ENCODE measurements at regions of chr14 and their contacts with region 1.

Region 1: DNA sequence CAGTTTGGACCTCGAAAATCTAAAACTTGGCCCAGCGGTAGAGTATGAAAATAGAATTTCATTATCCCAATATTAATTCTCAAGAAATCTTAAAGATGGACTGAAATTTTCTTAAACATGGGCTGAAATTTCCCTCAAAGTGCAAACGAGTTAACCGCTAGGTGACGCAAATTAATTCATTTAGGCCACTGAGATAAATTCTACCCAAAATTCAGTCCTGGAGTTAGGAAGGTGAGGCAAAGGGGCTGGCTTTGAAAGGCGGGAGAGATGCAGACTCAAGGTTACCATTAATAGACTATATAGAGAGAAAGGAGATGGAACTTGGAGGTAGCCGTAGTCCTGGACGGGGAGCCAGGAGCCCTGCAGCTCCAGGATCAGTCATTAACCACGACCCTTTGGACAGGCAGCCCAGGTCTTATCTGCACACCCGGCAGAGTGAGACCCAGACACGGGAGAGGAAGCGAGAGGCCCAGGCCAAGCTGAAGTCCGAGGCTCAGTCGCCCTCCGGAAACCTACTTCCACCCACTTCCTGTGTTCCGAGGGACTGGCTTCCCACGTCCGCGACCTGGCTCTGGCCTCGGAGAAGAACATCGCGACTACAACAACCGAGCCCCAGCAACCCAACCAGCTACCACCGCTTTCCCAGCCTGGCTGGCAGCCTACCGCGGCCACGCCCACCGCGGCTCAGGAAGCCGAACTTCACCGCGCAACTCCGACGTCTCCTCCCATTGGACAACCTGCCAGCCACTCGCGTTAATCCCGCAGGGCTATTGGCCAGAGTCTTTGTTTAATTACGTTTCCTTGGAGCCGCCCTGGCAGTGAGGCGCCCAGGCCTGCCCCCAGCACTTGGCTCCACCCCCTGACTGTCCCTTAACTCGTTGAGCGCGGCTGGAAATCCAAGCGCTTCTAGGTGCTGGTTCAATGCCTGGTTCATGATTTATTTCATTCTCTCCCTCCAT is at the start of gene EFCAB11:
- DNase-seq: peak; percentile 99
- ATAC-seq: peak; percentile 75
- H3K4me3 ChIP-seq: peak within 1 kb of the TSS; percentile 81
- H3K27ac ChIP-seq: peak within 1 kb of the TSS; percentile 61
- H3K4me1 ChIP-seq: peaks cover 20% of the 10 kb centered on the region
- H3K27me3 ChIP-seq: no peaks in the 10 kb centered on the region
- CTCF ChIP-seq: peak; percentile 40; the same call in 1 of the 2 replicates
- total RNA-seq, gene EFCAB11: 7.0 and 10.0 TPM in 2 replicates

Region 2: DNA sequence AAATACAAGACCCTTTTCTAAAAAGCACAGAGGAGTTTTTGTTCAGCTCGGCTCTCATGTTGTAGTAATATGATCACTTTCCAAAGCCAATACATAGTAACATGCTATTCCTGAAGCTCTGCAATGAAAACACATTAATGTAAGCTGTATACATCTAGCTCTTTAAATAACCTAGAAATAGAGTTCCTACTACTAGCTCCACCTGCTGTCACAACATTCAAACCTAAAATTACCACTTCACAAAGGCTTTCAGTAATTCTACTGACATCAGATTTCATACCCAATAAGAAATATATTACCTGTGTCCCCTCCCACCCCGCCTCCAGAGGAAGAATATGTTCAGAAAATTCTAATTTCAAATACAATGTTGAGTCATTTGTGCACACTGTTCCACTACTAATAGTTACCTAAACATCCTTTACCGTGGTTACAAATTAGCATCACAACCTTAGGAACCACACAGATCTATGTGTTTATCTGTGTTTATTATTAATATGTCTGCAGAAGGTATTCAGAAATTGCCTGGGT is 17.6 kb before region 1 on chr14:
- CTCF ChIA-PET with region 1: interaction called, 4 read pairs
- POLR2A ChIA-PET with region 1: interaction called, 3 read pairs
- intact Hi-C with region 1: loop called (anchors 1 kb)
- DNase-seq: peak; percentile 26
- ATAC-seq: peak; percentile 64
- H3K4me3 ChIP-seq: no peak overlapping the region
- H3K27ac ChIP-seq: no peak overlapping the region
- H3K4me1 ChIP-seq: no peaks in the 10 kb centered on the region
- H3K27me3 ChIP-seq: no peaks in the 10 kb centered on the region
- CTCF ChIP-seq: peak; percentile 46

Region 3: DNA sequence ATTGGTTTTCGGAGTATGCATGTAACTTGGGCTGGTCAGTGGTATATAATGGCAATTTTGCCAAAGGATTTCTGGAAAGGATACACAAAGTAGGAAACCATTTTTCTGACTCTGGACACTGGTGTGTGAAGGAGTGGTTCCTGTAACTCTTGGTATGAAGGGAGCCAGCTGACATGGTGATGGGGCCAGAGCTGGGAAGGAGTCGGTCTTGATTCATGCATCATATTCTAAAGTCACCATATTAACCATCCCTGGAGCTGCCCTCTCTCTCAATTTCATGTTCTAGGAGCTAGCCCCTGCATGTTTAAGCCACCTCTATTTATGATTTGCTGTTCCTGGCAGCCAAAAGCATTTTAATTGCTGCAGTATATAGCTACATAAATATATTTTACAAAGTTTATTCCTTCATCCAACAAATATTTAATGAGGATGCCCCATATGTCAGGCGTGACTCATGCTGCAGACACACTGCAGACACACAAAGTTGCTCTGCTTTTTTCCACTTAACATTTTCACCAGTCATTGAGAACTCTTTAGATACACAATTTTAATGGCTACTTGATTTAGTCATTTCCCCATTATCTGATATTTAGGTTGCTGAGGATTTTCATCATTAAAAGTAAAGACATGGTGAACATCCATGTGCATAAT is 223.3 kb after region 1 on chr14:
- CTCF ChIA-PET with region 1: no interaction called
- POLR2A ChIA-PET with region 1: interaction called, 10 read pairs
- intact Hi-C with region 1: no loop called
- DNase-seq: peak; percentile 37
- ATAC-seq: peak; percentile 85
- H3K4me3 ChIP-seq: no peak overlapping the region
- H3K27ac ChIP-seq: no peak overlapping the region
- H3K4me1 ChIP-seq: peaks cover 4% of the 10 kb centered on the region; the same call in 1 of the 2 replicates
- H3K27me3 ChIP-seq: no peaks in the 10 kb centered on the region
- CTCF ChIP-seq: no peak